Activated naive CD4-positive, alpha-beta T cell treated with anti-CD3 and anti-CD28 coated beads for 36 hours (primary cell): ENCODE measurements at regions of chr17 and their contacts with region 1.

Region 1: DNA sequence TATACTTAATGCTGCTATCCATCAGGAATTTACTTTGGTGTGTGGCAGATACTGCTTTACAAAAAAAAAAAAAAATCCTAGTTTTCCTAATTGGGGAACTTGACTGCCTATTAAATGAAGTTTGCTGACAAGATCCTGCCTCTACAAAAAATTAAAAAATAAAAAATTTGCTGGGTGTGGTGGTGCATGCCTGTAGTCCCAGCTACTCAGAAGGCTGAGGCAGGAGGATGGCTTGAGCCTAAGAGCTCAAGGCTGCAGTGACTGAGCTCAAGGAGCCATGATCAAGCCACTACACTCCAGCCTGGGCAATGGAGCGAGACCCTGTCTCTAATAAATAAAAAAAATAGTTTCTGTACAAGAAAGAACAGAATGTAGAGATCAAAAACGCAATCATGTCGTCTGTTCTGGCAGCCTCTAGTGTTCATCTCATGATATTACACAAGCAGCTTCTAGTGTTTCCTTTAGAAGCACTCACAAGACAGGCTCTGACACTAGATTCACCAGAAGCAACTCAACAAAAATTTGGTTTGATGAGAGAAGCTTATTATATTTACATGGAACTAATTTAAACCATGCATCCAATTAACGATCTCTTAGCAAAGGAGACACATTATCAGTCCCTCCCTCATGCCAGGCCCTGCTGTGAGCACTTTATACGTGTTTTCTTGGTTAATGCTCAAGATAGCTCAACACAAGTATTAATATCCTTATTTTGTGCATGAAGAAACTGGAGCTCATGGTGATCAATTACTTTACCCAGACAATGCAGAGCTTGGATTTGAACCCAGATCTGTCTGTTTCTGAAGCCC is 6.8 kb upstream of the KRTAP17-1 start:
- DNase-seq: peak; percentile 28
- H3K4me3 Mint-ChIP-seq: no peak overlapping the region
- H3K27ac Mint-ChIP-seq: no peak overlapping the region
- H3K4me1 Mint-ChIP-seq: peaks cover 37% of the 10 kb centered on the region
- H3K27me3 Mint-ChIP-seq: no peaks in the 10 kb centered on the region

Region 2: DNA sequence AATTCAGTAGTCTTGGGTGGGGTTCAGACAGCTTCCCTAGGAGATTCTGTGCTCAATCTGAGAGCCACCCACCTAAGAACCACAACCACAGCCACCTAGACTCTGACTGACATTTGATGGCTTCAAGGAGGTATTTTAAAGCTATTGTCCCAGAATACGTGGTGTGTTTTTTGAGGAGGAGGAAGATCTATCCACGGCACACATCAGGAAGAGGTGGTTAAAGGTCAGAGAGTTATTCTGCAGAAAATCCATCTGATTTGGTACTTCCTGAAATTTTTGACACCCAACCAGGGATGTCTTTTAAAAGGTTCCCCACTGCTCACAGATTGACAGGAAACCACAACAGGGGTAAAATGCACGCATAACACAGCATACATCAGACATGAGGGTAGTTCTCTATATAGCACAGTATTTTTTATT is 699.8 kb before region 1 on chr17:
- CTCF ChIA-PET with region 1: no interaction called
- intact Hi-C with region 1: loop called (anchors 5 kb)
- DNase-seq: no peak
- H3K4me3 Mint-ChIP-seq: no peak overlapping the region
- H3K27ac Mint-ChIP-seq: no peak overlapping the region
- H3K4me1 Mint-ChIP-seq: peaks cover 51% of the 10 kb centered on the region
- H3K27me3 Mint-ChIP-seq: no peaks in the 10 kb centered on the region

Region 3: DNA sequence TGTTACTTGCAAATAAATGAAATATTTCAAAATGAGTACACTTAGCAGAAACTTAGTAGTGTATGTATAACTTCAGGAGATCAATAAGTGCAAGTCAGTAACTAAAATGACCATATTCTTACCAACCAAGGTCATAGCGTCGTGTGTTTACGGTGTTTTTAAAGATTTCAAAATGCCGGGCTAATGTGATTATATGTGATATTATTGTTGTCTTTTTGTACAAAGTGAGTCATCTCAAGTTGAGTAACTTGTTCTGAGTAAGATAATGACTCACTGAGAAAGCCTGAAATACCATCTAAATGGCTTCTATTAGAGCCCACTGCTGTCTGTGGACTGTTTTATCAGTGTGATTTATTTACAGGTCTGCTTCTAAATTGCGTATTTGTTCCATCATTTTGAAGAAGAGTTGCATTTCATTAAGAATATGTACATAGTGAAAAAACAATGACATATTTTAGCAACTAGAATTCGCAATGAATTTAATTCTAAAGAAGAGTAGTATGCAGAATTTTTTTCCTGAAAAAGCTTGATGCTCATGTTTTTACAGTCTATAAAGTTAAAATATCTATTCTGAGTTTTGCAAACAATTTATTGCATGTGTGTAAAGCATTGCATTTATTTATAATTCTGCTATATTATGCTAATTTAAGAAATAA is 468.0 kb before region 1 on chr17:
- CTCF ChIA-PET with region 1: no interaction called
- intact Hi-C with region 1: loop called (anchors 5 kb)
- DNase-seq: no peak
- H3K4me3 Mint-ChIP-seq: no peak overlapping the region
- H3K27ac Mint-ChIP-seq: no peak overlapping the region
- H3K4me1 Mint-ChIP-seq: peaks cover 2% of the 10 kb centered on the region
- H3K27me3 Mint-ChIP-seq: peaks cover 5% of the 10 kb centered on the region

Region 4: DNA sequence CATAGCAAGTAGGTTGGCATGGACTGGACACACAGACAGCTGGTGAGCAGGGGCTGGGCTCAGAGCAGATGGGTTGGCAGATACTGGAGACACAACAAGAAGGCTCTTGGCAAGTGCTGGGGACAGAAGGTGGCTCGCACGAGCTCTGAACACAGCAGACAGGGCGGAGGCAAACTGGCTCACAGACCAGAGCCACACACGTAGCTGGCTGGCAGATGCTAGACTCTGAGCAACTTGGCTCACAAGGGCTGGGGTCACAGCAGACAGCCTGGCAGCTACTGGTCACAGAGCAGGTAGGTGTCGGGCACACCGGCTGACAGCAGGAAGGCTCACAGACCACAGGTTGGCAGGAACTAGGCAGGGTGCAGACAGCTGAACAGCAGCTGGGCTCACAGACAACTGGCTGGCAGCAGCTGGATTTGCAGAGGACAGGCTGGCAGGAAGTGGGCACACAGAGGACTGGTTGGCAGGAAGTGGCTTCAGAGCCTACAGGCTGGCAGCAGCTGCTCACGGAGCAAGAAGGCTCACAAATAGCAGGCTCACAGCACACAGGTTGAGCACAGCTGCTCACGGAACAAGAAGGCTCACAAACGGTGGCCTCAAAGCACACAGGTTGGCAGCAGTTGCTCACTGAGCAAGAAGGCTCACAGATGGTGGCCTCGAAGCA is 13.9 kb before region 1 on chr17:
- CTCF ChIA-PET with region 1: interaction called, 14 read pairs
- intact Hi-C with region 1: no loop called
- DNase-seq: peak; percentile 76
- H3K4me3 Mint-ChIP-seq: peak overlapping the region; percentile 52
- H3K27ac Mint-ChIP-seq: peak overlapping the region; percentile 10
- H3K4me1 Mint-ChIP-seq: peaks cover 47% of the 10 kb centered on the region
- H3K27me3 Mint-ChIP-seq: no peaks in the 10 kb centered on the region

Region 5: GRCh38 chr17:41563607-41564170 is 241.4 kb after region 1 on chr17:
- CTCF ChIA-PET with region 1: no interaction called
- intact Hi-C with region 1: no loop called
- DNase-seq: no peak
- H3K4me3 Mint-ChIP-seq: no peak overlapping the region
- H3K27ac Mint-ChIP-seq: no peak overlapping the region
- H3K4me1 Mint-ChIP-seq: peaks cover 8% of the 10 kb centered on the region
- H3K27me3 Mint-ChIP-seq: peaks cover 20% of the 10 kb centered on the region

Region 6: DNA sequence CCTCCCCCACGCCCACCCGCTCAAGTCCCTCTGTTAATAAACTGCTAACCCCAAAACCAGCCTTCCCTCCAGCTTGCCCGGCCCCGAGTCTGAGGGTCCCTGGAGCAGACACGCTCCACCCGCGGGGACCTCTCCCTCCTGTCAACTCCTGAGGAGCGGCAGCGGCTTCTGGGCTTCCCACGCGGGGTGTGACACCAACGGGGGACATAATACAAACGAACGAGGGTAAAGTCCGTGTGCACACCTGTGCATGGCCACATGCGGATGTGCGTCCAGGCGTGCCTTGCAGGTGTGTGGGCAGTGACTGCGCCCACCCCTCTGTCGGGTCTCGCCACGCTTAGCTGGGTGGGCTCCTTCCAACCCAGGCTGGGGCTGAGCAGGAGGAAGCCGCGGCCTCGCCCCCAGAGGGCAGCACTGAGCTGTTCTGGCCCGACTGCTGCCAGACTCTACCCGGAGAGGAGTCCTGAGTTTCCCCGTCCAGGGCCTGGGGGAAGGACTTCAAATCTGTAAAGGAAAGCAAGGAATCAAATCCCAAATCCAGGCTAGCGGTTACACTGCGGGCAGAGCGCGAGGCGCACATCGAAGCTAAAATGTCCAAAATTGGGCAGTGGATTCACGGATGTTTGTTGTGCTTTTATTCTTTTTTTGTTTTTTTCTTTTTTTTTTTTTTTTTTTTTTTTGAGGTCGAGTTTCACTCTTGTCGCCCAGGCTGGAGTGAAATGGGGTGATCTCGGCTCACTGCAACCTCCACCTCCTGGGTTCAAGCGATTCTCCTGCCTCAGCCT is 326.3 kb after region 1 on chr17:
- CTCF ChIA-PET with region 1: interaction called, 4 read pairs
- intact Hi-C with region 1: loop called (anchors 5 kb)
- DNase-seq: peak; percentile 89
- H3K4me3 Mint-ChIP-seq: peak overlapping the region; percentile 43
- H3K27ac Mint-ChIP-seq: no peak overlapping the region
- H3K4me1 Mint-ChIP-seq: peaks cover 8% of the 10 kb centered on the region
- H3K27me3 Mint-ChIP-seq: no peaks in the 10 kb centered on the region